ENCODE measurements at regions of chr12 and their contacts with region 1.

Region 1: GRCh38 chr12:112418608-112419298 is at the start of gene PTPN11:
- DNase-seq: peak; percentile 86
- H3K4me3 ChIP-seq: peak within 1 kb of the TSS; percentile 100
- H3K27ac ChIP-seq: peak within 1 kb of the TSS; percentile 93
- H3K4me1 ChIP-seq: peaks cover 9% of the 10 kb centered on the region
- H3K27me3 ChIP-seq: no peaks in the 10 kb centered on the region
- CTCF ChIP-seq: no peak; the same call in 1 of the 2 replicates
- total RNA-seq, gene PTPN11: 157 and 158 TPM in 2 replicates

Region 2: DNA sequence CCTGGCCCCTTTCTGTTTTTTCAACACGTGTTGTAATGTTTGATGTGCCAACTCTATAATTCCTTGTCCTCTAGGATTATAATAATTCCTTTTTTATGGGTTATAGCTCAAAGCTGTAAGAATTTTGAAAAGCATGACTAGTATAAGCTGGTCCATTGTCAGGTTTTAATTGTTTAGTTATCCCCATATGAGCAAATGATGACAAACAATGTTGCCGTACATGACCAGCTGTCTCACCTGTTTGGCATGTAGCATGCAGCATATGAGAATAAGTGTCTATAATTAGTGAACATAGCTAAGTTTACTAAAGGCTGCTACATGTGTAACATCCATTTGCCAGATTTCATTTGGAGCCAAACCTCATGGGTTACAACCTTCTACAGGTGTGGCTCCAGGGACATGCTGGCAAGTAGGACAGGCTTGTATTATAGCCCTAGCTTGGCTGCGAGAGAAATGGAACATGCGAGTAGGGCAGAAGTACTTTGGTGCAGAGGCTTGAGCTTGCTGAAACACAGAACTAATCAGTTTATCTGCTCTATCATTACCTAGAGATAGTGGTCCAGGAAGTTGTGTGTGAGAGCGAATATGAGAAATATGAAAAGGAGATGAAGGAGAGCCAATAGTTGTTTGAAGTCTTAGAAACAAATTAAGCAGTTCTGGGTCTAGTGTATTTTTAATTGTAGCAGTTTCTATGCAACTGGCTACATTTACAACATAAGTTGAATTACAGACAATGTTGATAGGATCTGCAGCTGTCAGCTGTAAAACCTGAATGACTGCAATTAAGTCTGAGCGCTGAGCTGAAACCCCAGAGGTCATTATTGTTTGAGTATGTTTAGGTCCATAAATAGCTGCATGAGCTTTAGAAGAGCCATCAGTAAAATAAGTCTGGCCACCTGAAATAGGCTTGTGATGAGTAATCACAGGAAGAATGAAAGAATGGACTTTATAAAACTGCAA is 599.3 kb before region 1 on chr12:
- CTCF ChIA-PET with region 1: no interaction called
- POLR2A ChIA-PET with region 1: no interaction called
- intact Hi-C with region 1: loop called (anchors 10 kb)
- DNase-seq: no peak
- H3K4me3 ChIP-seq: no peak overlapping the region
- H3K27ac ChIP-seq: no peak overlapping the region
- H3K4me1 ChIP-seq: no peaks in the 10 kb centered on the region
- H3K27me3 ChIP-seq: no peaks in the 10 kb centered on the region
- CTCF ChIP-seq: no peak

Region 3: GRCh38 chr12:112900299-112901145 is 481.8 kb after region 1 on chr12:
- CTCF ChIA-PET with region 1: interaction called, 11 read pairs
- POLR2A ChIA-PET with region 1: no interaction called
- intact Hi-C with region 1: no loop called
- DNase-seq: peak; percentile 83
- H3K4me3 ChIP-seq: no peak overlapping the region
- H3K27ac ChIP-seq: no peak overlapping the region
- H3K4me1 ChIP-seq: peaks cover 13% of the 10 kb centered on the region
- H3K27me3 ChIP-seq: no peaks in the 10 kb centered on the region
- CTCF ChIP-seq: peak; percentile 81

Measured in A673 (cell line).